ENCODE measurements at regions of chr1 and their contacts with region 1.

Region 1: DNA sequence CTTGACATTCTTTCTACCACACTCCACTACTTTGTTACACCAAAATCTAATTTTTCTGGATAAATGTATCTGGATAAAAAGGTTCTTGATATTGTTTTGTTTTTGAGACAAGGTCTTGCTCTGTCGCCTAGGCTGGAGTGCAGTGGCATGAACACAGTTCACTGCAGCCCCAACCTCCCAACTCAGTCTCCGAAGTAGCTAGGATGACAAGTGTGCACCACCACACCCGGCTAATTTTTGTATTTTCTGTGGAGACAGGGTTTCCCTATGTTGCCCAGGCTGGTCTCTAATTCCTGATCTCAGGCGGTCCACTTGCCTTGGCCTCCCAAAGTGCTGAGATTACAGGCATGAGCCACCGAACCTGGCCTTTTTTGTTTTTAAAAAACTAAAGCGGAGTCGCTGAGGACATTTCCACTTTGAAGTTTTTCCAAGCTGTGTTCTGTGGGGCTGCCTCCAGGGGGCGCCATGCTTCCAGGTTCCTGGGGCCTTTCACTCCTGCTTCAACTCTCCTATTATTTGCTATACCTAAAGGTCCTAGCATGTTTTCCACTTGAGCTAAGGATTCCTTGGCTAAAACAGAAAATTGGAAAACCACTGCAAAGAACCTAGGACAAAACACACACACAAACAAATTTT is 14.1 kb upstream of the NCMAP start:
- DNase-seq: peak; percentile 39
- H3K4me3 Mint-ChIP-seq: no peak overlapping the region
- H3K27ac Mint-ChIP-seq: peak overlapping the region; percentile 77
- H3K4me1 Mint-ChIP-seq: peaks cover 67% of the 10 kb centered on the region
- H3K27me3 Mint-ChIP-seq: no peaks in the 10 kb centered on the region

Region 2: GRCh38 chr1:24491577-24492360 is 50.1 kb before region 1 on chr1:
- CTCF ChIA-PET with region 1: interaction called, 11 read pairs
- POLR2A ChIA-PET with region 1: no interaction called
- DNase-seq: no peak
- H3K4me3 Mint-ChIP-seq: no peak overlapping the region
- H3K27ac Mint-ChIP-seq: peak overlapping the region; percentile 32
- H3K4me1 Mint-ChIP-seq: peaks cover 34% of the 10 kb centered on the region
- H3K27me3 Mint-ChIP-seq: no peaks in the 10 kb centered on the region

Region 3: GRCh38 chr1:24567792-24568388 is 26.1 kb after region 1 on chr1:
- CTCF ChIA-PET with region 1: no interaction called
- POLR2A ChIA-PET with region 1: no interaction called
- DNase-seq: no peak
- H3K4me3 Mint-ChIP-seq: no peak overlapping the region
- H3K27ac Mint-ChIP-seq: peak overlapping the region; percentile 41
- H3K4me1 Mint-ChIP-seq: peaks cover 6% of the 10 kb centered on the region
- H3K27me3 Mint-ChIP-seq: peaks cover 2% of the 10 kb centered on the region

Region 4: DNA sequence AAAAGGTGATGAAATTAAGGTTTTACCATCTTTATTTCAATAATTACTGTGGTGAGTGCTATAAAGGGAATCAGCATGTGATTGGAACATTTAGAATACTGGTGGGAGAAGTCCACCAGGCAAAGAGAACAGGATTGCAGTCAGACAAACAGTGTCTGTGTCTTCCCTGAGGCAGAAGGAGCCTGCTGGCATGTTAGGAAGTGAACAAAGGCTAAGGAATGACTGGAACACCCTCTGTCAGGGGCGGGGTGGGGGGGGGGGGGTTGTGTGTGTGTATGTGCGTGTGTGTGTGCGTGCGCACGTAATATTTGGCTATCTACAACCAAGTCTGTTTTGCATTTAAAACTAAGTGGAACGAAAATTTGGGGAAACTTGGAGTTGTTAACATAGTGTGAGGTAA is 131.5 kb after region 1 on chr1:
- CTCF ChIA-PET with region 1: no interaction called
- POLR2A ChIA-PET with region 1: no interaction called
- DNase-seq: no peak
- H3K4me3 Mint-ChIP-seq: no peak overlapping the region
- H3K27ac Mint-ChIP-seq: no peak overlapping the region
- H3K4me1 Mint-ChIP-seq: no peaks in the 10 kb centered on the region
- H3K27me3 Mint-ChIP-seq: no peaks in the 10 kb centered on the region